Adrenal gland (tissue), 19 donors: ENCODE measurements at regions of chr6 and their contacts with region 1.

Region 1: DNA sequence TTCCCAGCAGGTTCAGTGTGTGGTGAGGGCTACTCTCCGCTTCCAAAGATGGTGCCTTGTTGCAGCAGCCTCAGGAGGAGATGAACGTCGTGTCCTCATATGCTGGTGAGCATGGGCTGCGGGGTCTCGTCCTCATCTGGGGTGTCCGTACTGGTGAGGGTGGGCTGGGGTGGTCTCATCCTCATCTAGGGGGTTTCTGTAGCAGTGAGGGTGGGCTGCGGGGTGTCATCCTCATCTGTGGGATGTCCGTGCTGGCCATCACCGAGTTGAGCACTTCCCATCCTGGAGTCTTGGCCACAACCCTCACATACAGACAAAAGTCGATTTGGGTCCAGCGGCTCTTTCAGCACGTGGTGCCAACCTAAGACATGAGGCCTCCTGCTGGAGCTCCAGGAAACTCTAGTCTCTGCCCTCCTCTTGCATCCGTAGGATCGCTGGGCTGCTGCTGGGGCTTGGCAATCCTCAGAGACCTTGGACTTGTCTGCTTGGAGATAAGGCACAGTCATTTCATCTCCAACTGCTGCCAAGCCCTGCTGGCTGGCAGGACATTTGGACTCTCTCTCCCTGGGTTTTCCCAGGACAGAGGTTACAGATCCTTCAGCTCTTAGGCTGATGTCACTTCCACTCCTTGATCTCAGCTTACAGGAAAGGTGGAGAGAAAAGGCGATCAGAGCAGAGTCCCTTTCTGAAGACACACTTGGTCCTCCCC is 160.4 kb downstream of the PACRG start:
- DNase-seq: peak; percentile 66 to 92 (median 87)
- H3K4me3 ChIP-seq: no peak overlapping the region
- H3K27ac ChIP-seq: peak overlapping the region in 4 of 5 donors; percentile 23 to 57 (median 36)
- H3K4me1 ChIP-seq: peaks cover 0 to 6% of the 10 kb centered on the region in 2 donors
- H3K27me3 ChIP-seq: no peaks in the 10 kb centered on the region
- CTCF ChIP-seq: peak in 1 of 6 experiments; percentile 17
- POLR2A ChIP-seq: peak in 1 of 2 donors; percentile 28

Region 2: GRCh38 chr6:162798546-162799266 is 89.4 kb before region 1 on chr6:
- intact Hi-C with region 1: no loop called
- DNase-seq: no peak
- H3K4me3 ChIP-seq: no peak overlapping the region
- H3K27ac ChIP-seq: no peak overlapping the region
- H3K4me1 ChIP-seq: no peaks in the 10 kb centered on the region
- H3K27me3 ChIP-seq: no peaks in the 10 kb centered on the region
- CTCF ChIP-seq: no peak
- POLR2A ChIP-seq: no peak

Region 3: GRCh38 chr6:162873537-162873936 is 14.6 kb before region 1 on chr6:
- intact Hi-C with region 1: no loop called
- DNase-seq: no peak
- H3K4me3 ChIP-seq: no peak overlapping the region
- H3K27ac ChIP-seq: no peak overlapping the region
- H3K4me1 ChIP-seq: peaks cover 0 to 4% of the 10 kb centered on the region in 2 donors
- H3K27me3 ChIP-seq: no peaks in the 10 kb centered on the region
- CTCF ChIP-seq: no peak
- POLR2A ChIP-seq: no peak

Region 4: DNA sequence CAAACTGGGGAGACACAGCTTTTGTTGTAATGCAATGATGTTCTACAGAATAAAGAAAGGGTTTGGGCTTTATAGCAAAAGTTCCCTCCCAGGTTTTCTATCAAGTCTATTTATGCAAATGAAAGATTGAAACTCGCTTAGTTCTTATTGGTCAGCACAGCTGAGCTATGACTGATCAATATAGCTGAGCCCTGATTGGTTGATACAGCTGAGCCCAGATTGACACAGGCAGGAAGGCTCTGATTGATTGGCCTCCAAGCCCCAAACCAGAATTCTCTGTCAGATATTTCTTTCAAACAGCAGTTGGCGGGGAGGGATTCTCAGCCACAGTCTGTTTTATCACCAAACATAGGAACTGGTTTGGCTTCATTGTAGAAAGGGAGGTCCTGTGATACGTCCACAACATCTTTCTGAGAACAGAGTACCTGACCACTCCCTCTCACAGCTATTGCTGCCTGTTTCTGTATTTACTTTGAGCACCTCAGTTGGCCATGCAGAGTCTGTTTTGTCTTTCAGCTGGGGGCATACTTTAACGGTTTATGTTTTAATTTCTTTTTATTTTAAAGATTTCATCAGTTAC is 63.1 kb after region 1 on chr6:
- intact Hi-C with region 1: no loop called
- DNase-seq: no peak
- H3K4me3 ChIP-seq: no peak overlapping the region
- H3K27ac ChIP-seq: no peak overlapping the region
- H3K4me1 ChIP-seq: no peaks in the 10 kb centered on the region
- H3K27me3 ChIP-seq: no peaks in the 10 kb centered on the region
- CTCF ChIP-seq: no peak
- POLR2A ChIP-seq: no peak

Region 5: DNA sequence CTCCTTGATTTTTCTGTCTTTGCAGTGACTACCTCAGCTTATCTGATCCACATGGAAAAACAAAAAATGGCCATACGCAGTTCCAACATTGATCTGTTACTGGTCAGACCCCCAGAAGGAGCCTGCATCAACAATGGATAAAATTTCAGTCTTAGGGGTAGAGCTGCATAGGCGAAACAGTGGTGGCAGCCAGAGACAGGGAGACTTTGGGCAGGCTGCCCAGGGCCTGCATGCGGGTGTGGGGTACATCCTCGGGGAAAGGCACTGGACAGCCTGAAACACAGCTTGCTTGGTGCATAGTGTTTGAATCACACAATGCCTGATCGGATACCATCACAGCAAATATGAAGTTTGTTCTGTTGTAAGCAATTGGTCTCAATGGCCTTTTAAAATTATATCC is 1374.2 kb after region 1 on chr6:
- intact Hi-C with region 1: loop called in 1 of 2 experiments (anchors 10 kb)
- DNase-seq: no peak
- H3K4me3 ChIP-seq: no peak overlapping the region
- H3K27ac ChIP-seq: no peak overlapping the region
- H3K4me1 ChIP-seq: no peaks in the 10 kb centered on the region
- H3K27me3 ChIP-seq: no peaks in the 10 kb centered on the region
- CTCF ChIP-seq: no peak
- POLR2A ChIP-seq: no peak